CD8-positive, alpha-beta memory T cell (primary cell): ENCODE measurements at regions of chr17 and their contacts with region 1.

Region 1: DNA sequence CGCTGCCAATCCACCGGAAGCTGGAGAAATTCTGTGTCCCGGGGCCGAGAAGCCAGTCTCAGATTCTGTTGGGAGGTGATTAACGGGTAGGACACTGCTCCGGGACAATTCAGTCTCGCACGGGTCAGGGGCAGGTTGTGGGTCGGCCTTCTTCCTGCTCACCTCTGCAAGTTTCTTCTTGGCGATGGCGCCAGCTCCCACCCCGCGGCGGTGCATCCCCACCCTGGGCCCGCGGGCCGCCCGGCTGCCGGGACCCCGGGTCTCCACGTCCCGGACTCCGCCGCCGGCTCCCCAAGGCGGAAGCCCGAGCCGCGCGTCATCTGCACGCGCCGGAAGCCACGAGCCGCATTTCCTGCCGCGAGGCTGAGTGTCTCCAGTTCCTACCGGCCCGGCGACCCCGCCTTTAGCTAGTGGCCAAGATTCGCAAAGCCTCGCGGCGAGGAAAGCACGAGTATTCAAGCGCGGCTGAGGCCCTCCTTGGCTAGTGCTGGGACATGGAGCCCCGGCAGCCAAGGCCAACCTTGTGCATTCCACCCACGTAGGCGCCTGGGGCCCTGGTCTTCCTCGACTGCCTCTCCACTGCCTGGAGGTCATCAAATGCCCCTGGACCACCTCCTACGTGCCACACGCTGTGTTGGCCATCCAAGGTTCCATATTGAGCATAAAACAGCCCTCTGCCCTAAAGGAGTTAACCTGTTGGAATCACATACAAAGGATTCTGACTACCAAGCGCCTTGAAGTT is at the start of gene SNF8:
- DNase-seq: peak; percentile 88 to 93 (median 89)
- H3K4me3 ChIP-seq: peak within 1 kb of the TSS; percentile 99
- H3K4me3 Mint-ChIP-seq: peak within 1 kb of the TSS; percentile 92 to 97 (median 96)
- H3K27ac ChIP-seq: peak within 1 kb of the TSS; percentile 96
- H3K27ac Mint-ChIP-seq: peak within 1 kb of the TSS; percentile 93 to 100 (median 97)
- H3K4me1 ChIP-seq: peaks cover 17% of the 10 kb centered on the region
- H3K4me1 Mint-ChIP-seq: peaks cover 14 to 28% (median 25%) of the 10 kb centered on the region in 3 donors
- H3K27me3 ChIP-seq: no peaks in the 10 kb centered on the region
- H3K27me3 Mint-ChIP-seq: peaks cover 5 to 7% of the 10 kb centered on the region in 2 donors
- total RNA-seq, gene SNF8: 151 to 161 TPM

Region 2: DNA sequence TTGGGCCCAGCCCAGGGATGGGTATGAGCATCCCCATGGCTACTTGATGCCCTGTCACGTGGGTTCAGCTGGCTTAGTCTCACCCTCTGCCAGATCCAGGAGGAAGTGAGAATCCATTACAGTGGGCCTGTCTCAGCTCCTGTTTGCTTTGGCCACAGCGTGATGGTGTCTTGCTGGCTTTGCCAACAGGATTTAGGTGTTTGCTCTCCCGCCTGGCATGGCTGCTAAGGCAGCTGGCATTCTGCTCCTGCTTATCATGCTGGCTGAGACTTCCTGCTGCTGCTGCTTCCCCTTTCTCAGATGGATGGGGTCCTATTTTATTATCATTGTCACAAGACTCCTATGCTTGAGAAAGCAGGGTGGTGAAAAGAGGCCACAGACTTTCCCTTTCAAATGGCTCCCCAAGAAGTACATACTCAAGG is 187.8 kb before region 1 on chr17:
- CTCF ChIA-PET with region 1: no interaction called
- POLR2A ChIA-PET with region 1: no interaction called
- DNase-seq: no peak
- H3K4me3 ChIP-seq: no peak overlapping the region
- H3K4me3 Mint-ChIP-seq: no peak overlapping the region
- H3K27ac ChIP-seq: no peak overlapping the region
- H3K27ac Mint-ChIP-seq: no peak overlapping the region
- H3K4me1 ChIP-seq: no peaks in the 10 kb centered on the region
- H3K4me1 Mint-ChIP-seq: peaks cover 15 to 18% (median 16%) of the 10 kb centered on the region in 3 donors
- H3K27me3 ChIP-seq: peaks cover 60% of the 10 kb centered on the region
- H3K27me3 Mint-ChIP-seq: peaks cover 58 to 89% of the 10 kb centered on the region in 2 donors

Region 3: DNA sequence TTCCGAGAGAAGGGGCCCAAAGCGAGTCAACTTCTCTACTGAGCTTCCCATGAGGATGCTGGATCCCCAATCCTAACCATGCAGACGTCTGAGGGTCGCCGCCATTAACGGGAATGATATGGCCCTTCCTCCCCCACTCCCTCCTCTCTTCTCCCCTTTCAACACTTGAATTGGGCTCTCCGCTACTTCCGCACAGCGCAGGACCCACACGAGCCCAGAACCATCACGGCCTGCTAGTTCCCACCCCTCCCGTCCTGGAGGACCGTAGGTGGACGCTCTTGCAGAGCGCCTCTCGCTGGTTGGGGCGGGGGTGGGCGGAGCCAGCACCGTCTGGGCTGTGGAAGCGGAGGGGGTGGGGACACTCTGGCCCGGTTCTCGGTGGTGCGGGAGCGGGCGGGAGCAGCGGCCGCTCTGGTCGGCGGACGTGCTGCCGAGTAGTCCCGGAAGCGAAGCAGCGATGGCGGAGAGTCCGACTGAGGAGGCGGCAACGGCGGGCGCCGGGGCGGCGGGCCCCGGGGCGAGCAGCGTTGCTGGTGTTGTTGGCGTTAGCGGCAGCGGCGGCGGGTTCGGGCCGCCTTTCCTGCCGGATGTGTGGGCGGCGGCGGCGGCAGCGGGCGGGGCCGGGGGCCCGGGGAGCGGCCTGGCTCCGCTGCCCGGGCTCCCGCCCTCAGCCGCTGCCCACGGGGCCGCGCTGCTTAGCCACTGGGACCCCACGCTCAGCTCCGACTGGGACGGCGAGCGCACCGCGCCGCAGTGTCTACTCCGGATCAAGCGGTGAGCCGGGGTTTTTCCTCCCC is 36.4 kb before region 1 on chr17 and contains the start of gene UBE2Z:
- CTCF ChIA-PET with region 1: interaction called, 3 read pairs
- POLR2A ChIA-PET with region 1: interaction called, 11 read pairs
- DNase-seq: peak; percentile 79 to 90 (median 84)
- H3K4me3 ChIP-seq: peak within 1 kb of the TSS; percentile 87
- H3K4me3 Mint-ChIP-seq: peak within 1 kb of the TSS; percentile 88 to 99 (median 93)
- H3K27ac ChIP-seq: peak within 1 kb of the TSS; percentile 91
- H3K27ac Mint-ChIP-seq: peak within 1 kb of the TSS; percentile 87 to 99 (median 98)
- H3K4me1 ChIP-seq: peaks cover 29% of the 10 kb centered on the region
- H3K4me1 Mint-ChIP-seq: peaks cover 45 to 56% (median 53%) of the 10 kb centered on the region in 3 donors
- H3K27me3 ChIP-seq: no peaks in the 10 kb centered on the region
- H3K27me3 Mint-ChIP-seq: no peaks in the 10 kb centered on the region
- total RNA-seq, gene UBE2Z: 100 to 103 TPM